ENCODE measurements at regions of chr1 and their contacts with region 1.

Region 1: GRCh38 chr1:18234790-18235242 is 127.2 kb downstream of the IGSF21 start:
- DNase-seq: peak; percentile 81
- H3K4me3 ChIP-seq: no peak overlapping the region; a peak in 1 of 4 replicates
- H3K27ac ChIP-seq: peak overlapping the region in 1 of 2 experiments; percentile 60; a peak in 1 of 4 replicates
- H3K4me1 ChIP-seq: peaks cover 0 to 12% of the 10 kb centered on the region in 2 experiments; a peak in 2 of 4 replicates
- H3K27me3 ChIP-seq: no peaks in the 10 kb centered on the region
- CTCF ChIP-seq: peak; percentile 52
- EP300 ChIP-seq: no peak; a peak in 1 of 4 replicates
- RAD21 ChIP-seq: peak; percentile 78

Region 2: GRCh38 chr1:18109756-18110597 is 124.8 kb before region 1 on chr1:
- CTCF ChIA-PET with region 1: interaction called, 16 read pairs
- POLR2A ChIA-PET with region 1: no interaction called
- DNase-seq: peak; percentile 80
- H3K4me3 ChIP-seq: peak overlapping the region; percentile 24 to 41; a peak in 2 of 4 replicates
- H3K27ac ChIP-seq: no peak overlapping the region
- H3K4me1 ChIP-seq: peaks cover 0 to 25% of the 10 kb centered on the region in 2 experiments; a peak in 1 of 4 replicates
- H3K27me3 ChIP-seq: peaks cover 20% of the 10 kb centered on the region; the same call in 1 of the 2 replicates
- CTCF ChIP-seq: no peak
- EP300 ChIP-seq: no peak
- RAD21 ChIP-seq: peak; percentile 14; the same call in 1 of the 2 replicates

Region 3: DNA sequence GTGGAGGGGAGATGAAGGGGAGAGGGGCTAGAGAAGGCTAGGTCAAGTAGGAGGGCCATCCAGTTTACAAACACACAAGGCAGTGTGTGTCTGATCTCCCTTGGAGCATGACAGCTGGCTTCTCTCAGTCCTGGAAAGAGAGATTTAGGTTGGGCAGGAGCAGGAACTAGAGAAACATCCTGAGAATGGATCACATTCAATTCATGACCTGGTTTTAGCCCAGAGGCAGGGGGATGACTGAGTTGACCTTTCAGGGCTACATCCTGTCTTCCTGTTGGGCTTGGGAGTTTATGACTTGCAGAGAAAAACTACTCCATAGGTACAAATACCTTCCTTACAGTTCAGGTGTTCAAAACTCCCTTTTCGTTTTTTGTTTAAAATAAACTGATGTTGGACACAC is 30.2 kb before region 1 on chr1:
- CTCF ChIA-PET with region 1: interaction called, 13 read pairs
- POLR2A ChIA-PET with region 1: interaction called, 3 read pairs
- DNase-seq: no peak
- H3K4me3 ChIP-seq: no peak overlapping the region
- H3K27ac ChIP-seq: no peak overlapping the region
- H3K4me1 ChIP-seq: peaks cover 0 to 5% of the 10 kb centered on the region in 2 experiments; a peak in 1 of 4 replicates
- H3K27me3 ChIP-seq: no peaks in the 10 kb centered on the region
- CTCF ChIP-seq: no peak
- EP300 ChIP-seq: no peak
- RAD21 ChIP-seq: no peak

Region 4: DNA sequence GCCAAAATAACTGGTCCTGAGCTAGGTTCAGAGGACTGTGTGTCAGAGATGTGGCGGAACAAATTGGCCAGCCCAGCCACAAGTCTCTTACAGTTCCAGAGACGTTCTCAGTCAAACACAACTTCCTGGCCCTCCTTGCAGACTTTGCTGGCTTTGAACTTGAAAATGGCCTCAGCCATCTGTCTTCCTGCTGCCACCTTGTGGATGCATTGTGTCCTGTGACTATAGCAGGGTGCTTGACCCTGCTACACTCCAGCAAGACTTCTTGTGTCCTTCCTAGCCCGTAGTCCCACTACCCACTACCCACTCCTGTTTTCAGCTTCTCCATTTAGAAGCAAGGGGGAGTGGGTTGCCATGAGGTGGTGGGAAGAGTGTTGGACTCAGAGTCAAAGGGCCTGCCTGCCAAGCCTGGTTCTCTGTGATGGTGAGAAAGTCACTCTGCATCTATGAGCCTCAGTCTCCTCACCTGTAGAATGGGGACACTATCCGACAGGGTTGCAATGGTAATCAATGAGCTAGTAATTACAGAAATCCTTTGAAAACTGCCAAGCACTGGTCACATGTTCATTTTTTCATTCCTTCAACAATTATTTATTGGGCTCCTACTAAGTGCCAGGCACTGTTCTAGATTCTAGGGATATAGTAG is 17.3 kb before region 1 on chr1:
- CTCF ChIA-PET with region 1: interaction called, 38 read pairs
- POLR2A ChIA-PET with region 1: no interaction called
- DNase-seq: peak; percentile 46
- H3K4me3 ChIP-seq: no peak overlapping the region
- H3K27ac ChIP-seq: no peak overlapping the region
- H3K4me1 ChIP-seq: no peaks in the 10 kb centered on the region
- H3K27me3 ChIP-seq: no peaks in the 10 kb centered on the region
- CTCF ChIP-seq: peak; percentile 11; the same call in 1 of the 2 replicates
- EP300 ChIP-seq: no peak
- RAD21 ChIP-seq: peak; percentile 65

Region 5: DNA sequence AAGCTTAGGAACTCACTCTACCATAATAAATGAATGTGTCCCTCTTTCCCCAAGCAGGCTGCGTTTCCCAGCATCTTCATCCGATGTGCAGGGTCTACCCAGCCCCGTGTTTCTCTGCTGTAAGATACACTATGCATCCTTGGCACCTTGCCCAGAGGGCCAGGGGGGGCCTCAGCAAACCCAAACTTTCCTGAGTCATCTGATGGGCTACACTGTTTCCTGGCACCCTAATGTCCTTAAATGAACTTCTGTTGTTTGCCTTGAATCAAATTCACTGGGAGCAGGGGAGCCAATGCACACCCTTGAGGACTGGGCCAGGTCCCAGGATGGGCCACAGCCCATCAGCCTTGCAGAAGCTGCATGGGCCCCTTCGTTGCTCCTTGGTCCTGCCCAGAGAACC is 18.3 kb after region 1 on chr1:
- CTCF ChIA-PET with region 1: interaction called, 15 read pairs
- POLR2A ChIA-PET with region 1: no interaction called
- DNase-seq: peak; percentile 58
- H3K4me3 ChIP-seq: no peak overlapping the region
- H3K27ac ChIP-seq: peak overlapping the region in 1 of 2 experiments; percentile 81; a peak in 2 of 4 replicates
- H3K4me1 ChIP-seq: peaks cover 0 to 16% of the 10 kb centered on the region in 2 experiments; a peak in 1 of 4 replicates
- H3K27me3 ChIP-seq: no peaks in the 10 kb centered on the region
- CTCF ChIP-seq: no peak
- EP300 ChIP-seq: no peak
- RAD21 ChIP-seq: no peak

Region 6: GRCh38 chr1:18282851-18283600 is 48.2 kb after region 1 on chr1:
- CTCF ChIA-PET with region 1: interaction called, 12 read pairs
- POLR2A ChIA-PET with region 1: no interaction called
- DNase-seq: peak; percentile 80
- H3K4me3 ChIP-seq: no peak overlapping the region
- H3K27ac ChIP-seq: peak overlapping the region in 1 of 2 experiments; percentile 76; a peak in 2 of 4 replicates
- H3K4me1 ChIP-seq: peaks cover 0 to 25% of the 10 kb centered on the region in 2 experiments; a peak in 2 of 4 replicates
- H3K27me3 ChIP-seq: no peaks in the 10 kb centered on the region
- CTCF ChIP-seq: no peak
- EP300 ChIP-seq: 0 out of 4 replicates have a peak, but pooled peaks of 1 of the 2 experiments have one; percentile 35
- RAD21 ChIP-seq: no peak

Region 7: GRCh38 chr1:18299441-18300338 is 64.9 kb after region 1 on chr1:
- CTCF ChIA-PET with region 1: interaction called, 24 read pairs
- POLR2A ChIA-PET with region 1: no interaction called
- DNase-seq: peak; percentile 73
- H3K4me3 ChIP-seq: no peak overlapping the region; a peak in 1 of 4 replicates
- H3K27ac ChIP-seq: no peak overlapping the region
- H3K4me1 ChIP-seq: peaks cover 0 to 4% of the 10 kb centered on the region in 2 experiments; a peak in 1 of 4 replicates
- H3K27me3 ChIP-seq: no peaks in the 10 kb centered on the region
- CTCF ChIP-seq: peak; percentile 41
- EP300 ChIP-seq: no peak
- RAD21 ChIP-seq: peak; percentile 58

Measured in SK-N-SH (cell line).